ENCODE measurements at regions of chr20 and their contacts with region 1.

Region 1: DNA sequence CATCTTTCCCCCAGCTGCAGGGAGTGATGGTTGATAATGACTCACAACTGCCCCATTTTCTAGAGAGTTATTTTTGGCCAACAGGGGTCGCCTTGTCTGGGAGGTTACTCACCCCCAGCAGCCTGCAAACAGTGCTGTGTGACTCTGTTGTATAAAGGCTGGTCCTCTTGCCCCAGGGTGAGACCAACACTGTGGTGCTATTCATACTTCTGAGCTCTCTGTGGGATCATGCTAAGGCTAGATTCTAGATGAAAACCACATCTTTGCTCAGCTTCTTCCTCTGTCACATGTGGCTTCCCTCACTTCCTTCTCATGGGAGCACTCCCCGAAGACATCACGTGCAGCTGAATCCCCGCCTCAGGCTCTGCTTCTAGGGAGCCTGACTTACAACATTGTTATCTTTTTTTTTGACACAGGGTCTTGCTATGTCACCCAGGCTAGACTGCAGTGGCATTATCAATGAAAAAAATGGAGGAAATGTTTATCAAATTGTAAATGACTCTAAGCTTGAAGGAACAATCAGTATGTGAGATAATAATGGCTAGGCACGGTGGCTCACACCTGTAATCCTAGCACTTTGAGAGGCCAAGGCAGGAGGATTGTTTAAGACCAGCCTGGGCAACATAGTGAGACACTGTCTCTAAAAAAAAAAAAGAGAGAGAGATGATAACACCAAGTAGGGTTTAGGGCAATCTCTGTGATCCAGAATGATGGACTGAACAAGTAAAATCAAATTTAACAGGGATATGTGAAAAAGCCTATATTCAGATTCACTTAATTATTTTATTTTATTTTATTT is 55.7 kb upstream of the SLC23A2 start:
- DNase-seq: peak; percentile 90
- ATAC-seq: peak; percentile 100
- H3K4me3 Mint-ChIP-seq: no peak overlapping the region
- H3K27ac Mint-ChIP-seq: peak overlapping the region; percentile 87
- H3K4me1 Mint-ChIP-seq: peaks cover 31% of the 10 kb centered on the region
- H3K27me3 Mint-ChIP-seq: peaks cover 1% of the 10 kb centered on the region

Region 2: DNA sequence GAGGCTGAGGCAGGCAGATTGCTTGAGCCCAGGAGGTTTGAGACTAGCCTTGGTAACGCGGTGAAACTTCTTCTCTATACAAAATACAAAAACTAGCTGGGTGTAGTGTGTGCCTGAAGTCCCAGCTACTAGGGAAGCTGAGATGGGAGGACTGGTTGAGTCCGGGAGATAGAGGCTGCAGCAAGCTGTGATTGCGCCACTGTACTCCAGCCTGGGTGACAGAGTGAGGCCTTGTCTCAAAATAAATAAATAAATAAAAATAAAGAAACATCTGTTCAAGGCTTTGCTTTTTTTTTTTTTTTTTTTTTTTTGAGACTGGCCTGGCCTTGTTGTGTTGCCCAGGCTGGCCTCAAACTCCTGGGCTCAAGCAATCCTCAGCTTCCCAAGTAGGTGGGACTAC is 32.0 kb before region 1 on chr20:
- CTCF ChIA-PET with region 1: no interaction called
- POLR2A ChIA-PET with region 1: no interaction called
- DNase-seq: no peak
- ATAC-seq: no peak
- H3K4me3 Mint-ChIP-seq: no peak overlapping the region
- H3K27ac Mint-ChIP-seq: no peak overlapping the region
- H3K4me1 Mint-ChIP-seq: no peaks in the 10 kb centered on the region
- H3K27me3 Mint-ChIP-seq: no peaks in the 10 kb centered on the region

Region 3: DNA sequence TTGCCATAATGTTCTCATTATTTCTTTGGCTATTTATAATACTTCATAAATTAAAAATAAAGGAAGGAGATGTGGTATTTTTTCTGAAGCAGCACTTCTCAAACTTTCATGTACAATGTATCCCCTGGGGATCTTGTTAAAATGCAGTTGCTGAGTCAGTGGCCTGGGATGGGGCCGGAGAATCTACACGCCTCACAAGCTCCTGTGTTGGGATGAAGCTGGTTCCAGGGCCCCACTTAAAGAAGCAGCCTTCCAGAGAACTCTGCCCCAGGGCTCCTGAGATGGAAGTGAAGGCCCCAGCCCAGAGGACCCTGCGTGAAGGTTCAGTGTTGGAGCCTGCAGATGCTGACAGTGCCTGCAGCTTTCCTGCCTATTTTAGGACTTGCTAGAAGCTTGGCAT is 15.6 kb before region 1 on chr20:
- CTCF ChIA-PET with region 1: interaction called, 12 read pairs
- POLR2A ChIA-PET with region 1: no interaction called
- DNase-seq: no peak
- ATAC-seq: no peak
- H3K4me3 Mint-ChIP-seq: no peak overlapping the region
- H3K27ac Mint-ChIP-seq: no peak overlapping the region
- H3K4me1 Mint-ChIP-seq: peaks cover 13% of the 10 kb centered on the region
- H3K27me3 Mint-ChIP-seq: peaks cover 15% of the 10 kb centered on the region

Region 4: DNA sequence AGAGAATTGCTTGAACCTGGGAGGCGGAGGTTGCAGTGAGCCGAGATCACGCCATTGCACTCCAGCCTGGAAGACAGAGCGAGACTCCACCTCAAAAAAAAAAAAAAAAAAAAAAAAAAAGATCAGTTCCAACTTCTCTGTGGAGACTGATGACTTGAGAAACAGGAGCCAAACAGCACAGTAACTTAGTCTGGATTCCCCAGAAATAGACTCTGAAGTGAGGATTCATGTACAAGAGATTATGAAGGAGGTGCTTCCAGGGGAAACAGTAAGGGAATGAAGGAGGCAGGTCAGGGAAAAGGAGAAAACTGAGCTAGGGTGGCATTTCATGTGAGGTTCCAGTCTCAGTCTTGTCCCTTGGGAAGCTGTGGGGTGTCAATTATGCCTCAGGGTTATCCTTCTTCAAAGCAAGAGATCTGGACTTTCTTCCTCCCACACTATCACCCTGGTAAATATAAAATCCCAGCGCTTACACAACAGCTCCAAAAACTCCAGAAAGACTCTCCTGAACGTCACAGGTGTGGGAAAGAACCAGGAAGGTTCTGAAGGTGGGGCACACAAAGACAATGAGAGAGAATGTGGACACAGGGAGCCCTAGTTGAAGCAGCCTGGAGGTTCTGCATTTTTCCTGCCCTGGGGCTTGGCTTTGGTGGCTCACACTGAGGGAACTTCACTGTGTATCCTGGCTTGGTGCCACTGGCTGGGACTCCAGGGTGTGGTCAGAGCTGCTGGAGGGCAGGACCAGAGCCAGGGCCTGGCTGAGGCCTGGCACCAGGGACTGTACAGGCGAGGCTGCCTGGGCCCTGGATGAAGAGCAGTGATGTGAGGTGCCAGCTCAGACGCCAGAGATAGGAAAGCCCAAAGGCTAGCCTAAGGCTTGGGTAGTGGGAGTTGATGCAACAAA is 16.0 kb after region 1 on chr20:
- CTCF ChIA-PET with region 1: interaction called, 22 read pairs
- POLR2A ChIA-PET with region 1: interaction called, 3 read pairs
- DNase-seq: no peak
- ATAC-seq: no peak
- H3K4me3 Mint-ChIP-seq: no peak overlapping the region
- H3K27ac Mint-ChIP-seq: peak overlapping the region; percentile 65
- H3K4me1 Mint-ChIP-seq: peaks cover 34% of the 10 kb centered on the region
- H3K27me3 Mint-ChIP-seq: no peaks in the 10 kb centered on the region

Region 5: DNA sequence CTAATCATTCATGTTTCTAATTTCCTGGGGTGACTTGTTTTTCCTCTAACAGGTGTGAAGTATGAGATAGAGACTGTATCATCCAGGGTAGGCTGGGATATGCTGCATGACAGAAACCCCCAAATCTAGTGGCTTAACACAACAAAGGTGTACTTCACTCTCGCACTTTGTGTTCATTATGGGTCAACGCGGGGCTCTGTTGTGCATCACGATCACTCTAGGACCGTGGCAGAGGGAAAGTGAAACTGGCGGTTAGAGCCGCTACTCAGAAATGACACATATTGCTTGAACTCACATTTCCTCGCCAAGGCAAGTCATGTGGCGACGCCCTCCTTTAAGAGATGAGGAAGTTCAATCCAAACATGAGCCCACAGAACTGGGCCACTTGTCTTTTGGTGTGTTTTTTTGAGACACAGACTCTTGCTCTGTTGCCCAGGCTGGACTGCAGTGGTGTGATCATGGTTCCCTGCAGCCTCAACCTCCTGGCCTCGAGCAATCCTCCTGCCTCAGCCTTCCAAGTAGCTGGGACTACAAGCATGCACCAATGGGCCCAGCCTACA is 21.5 kb after region 1 on chr20:
- CTCF ChIA-PET with region 1: interaction called, 32 read pairs
- POLR2A ChIA-PET with region 1: interaction called, 9 read pairs
- DNase-seq: peak; percentile 93
- ATAC-seq: peak; percentile 98
- H3K4me3 Mint-ChIP-seq: peak overlapping the region; percentile 76
- H3K27ac Mint-ChIP-seq: peak overlapping the region; percentile 97
- H3K4me1 Mint-ChIP-seq: peaks cover 56% of the 10 kb centered on the region
- H3K27me3 Mint-ChIP-seq: no peaks in the 10 kb centered on the region

Region 6: DNA sequence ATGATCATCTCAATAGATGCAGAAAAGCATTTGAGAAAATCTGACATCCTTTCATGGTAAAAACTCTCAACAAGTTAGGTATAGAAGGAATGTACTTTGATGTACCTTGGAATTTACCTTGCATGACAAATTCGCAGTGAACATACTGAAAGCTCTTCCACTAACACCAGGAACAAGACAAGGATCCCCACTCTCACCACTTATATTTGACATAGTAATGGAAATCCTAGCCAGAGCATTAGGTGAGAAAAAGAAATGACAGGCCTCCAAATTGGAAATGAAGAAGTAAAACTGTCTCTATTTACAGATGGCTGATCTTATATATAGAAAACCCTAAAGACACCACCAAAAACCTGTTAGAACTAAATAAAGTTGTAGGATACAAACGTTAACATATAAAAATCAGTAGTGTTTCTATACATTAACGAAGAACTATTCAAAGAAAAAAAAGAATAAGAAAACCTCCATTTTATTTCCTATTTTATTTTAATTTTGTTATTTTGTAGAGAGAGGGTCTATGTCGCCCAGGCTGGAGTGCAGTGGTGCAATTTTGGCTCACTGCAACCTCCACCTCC is 35.9 kb after region 1 on chr20:
- CTCF ChIA-PET with region 1: interaction called, 139 read pairs
- POLR2A ChIA-PET with region 1: no interaction called
- DNase-seq: no peak
- ATAC-seq: no peak
- H3K4me3 Mint-ChIP-seq: no peak overlapping the region
- H3K27ac Mint-ChIP-seq: no peak overlapping the region
- H3K4me1 Mint-ChIP-seq: peaks cover 16% of the 10 kb centered on the region
- H3K27me3 Mint-ChIP-seq: no peaks in the 10 kb centered on the region